AG04449 (cell line): ENCODE measurements at regions of chr14 and their contacts with region 1.

Region 1: GRCh38 chr14:91177073-91178034 is 63.5 kb downstream of the DGLUCY start:
- DNase-seq: no peak
- H3K4me3 ChIP-seq: no peak overlapping the region
- CTCF ChIP-seq: peak; percentile 76

Region 2: DNA sequence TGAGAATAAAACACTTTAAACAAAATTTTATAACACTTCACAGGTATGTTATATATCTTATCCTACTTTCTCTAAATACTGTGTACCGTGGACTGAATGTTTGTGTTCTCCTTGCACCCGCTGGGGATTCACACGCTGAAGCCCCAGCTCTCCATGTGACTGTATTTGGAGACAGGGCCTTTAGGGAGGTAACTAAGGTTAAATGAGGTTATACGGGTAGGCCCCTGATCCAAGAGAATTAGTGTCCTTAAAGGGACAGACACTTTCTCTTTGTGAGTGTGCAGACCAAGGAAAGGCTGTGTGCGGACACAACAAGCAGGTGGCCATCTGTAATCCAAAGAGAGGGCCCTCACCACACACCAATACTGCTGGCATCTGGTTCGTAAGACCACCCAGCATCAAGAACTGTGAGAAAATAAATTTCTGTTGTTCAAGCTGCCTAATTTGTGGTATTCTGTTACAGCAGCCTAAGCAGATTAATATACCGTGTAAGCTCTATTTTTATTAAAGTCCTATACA is 291.0 kb before region 1 on chr14:
- CTCF ChIA-PET with region 1: interaction called, 432 read pairs
- POLR2A ChIA-PET with region 1: no interaction called
- DNase-seq: no peak
- H3K4me3 ChIP-seq: no peak overlapping the region
- CTCF ChIP-seq: no peak

Region 3: DNA sequence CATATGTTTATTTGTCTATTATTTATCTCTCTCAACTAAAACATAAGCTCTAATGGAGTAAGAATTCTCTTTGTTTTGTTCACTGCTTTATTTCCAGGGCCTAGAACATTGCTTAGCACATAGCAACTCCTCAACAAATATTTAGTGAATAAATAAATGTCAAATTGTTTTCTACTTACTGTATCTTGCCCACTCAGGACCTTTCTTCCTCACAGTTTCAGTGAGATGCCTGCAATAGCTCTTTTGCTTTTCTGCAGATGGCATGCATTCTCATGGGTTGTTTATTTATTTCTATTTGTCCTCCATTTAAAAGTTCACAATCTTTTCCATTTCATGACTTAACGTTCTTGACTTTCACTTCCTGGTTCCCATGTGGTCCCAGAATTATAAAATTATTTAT is 266.2 kb before region 1 on chr14:
- CTCF ChIA-PET with region 1: interaction called, 58 read pairs
- POLR2A ChIA-PET with region 1: no interaction called
- DNase-seq: no peak
- H3K4me3 ChIP-seq: no peak overlapping the region
- CTCF ChIP-seq: no peak

Region 4: DNA sequence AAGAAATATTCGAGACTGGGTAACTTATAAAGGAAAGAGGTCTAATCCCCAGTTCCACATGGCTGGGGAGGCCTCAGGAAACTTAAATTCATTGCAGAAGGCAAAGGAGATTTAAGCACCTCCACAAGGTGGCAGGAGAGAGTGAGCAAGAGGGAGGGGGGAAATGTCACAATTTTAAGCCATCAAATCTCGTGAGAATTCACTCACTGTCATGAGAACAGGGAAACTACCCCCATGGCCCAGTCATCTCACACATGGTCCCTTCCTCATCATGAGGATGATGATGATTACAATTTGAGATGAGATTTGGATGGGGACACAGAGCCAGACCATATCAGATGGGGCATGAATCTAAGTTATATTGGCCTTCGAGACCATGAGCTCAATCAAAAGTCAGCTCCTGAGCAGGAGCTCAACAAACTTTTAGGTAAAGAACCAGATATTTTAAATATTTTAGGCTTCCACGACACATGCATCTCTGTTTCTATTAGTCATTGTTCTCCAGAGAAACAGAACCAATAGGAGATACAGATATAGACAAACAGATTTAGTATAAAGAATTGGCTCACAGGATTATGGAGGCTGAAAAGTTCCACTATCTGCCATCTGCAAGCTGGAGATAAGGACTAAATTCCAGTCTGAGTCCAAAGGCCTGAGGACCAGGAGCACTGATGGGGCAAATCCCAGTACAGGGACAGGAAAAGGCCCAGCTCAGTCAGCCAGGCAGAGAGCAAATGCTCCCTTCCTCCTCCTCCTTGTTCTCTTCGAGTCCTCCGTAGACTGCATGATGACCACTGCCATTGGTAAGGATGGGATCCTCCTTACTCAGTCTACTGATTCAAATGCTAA is 38.6 kb before region 1 on chr14:
- CTCF ChIA-PET with region 1: interaction called, 35 read pairs
- POLR2A ChIA-PET with region 1: interaction called, 3 read pairs
- DNase-seq: no peak
- H3K4me3 ChIP-seq: no peak overlapping the region
- CTCF ChIP-seq: peak; percentile 43

Region 5: GRCh38 chr14:91164685-91165084 is 12.7 kb before region 1 on chr14:
- CTCF ChIA-PET with region 1: interaction called, 25 read pairs
- POLR2A ChIA-PET with region 1: no interaction called
- DNase-seq: no peak
- H3K4me3 ChIP-seq: no peak overlapping the region
- CTCF ChIP-seq: no peak

Region 6: GRCh38 chr14:91286530-91286937 is 109.2 kb after region 1 on chr14:
- CTCF ChIA-PET with region 1: interaction called, 824 read pairs
- POLR2A ChIA-PET with region 1: no interaction called
- DNase-seq: no peak
- H3K4me3 ChIP-seq: no peak overlapping the region
- CTCF ChIP-seq: peak; percentile 78